HCT116 (cell line): ENCODE measurements at regions of chr11 and their contacts with region 1.

Region 1: GRCh38 chr11:73779084-73779902 is 8.4 kb upstream of the MRPL48 start:
- DNase-seq: peak; percentile 97
- ATAC-seq: peak; percentile 97
- H3K4me3 ChIP-seq: peak overlapping the region; percentile 57 to 62
- H3K27ac ChIP-seq: peak overlapping the region; percentile 66
- H3K4me1 ChIP-seq: peaks cover 13 to 23% of the 10 kb centered on the region in 2 experiments
- H3K27me3 ChIP-seq: no peaks in the 10 kb centered on the region
- CTCF ChIP-seq: no peak
- POLR2A ChIP-seq: peak; percentile 56
- RAD21 ChIP-seq: no peak

Region 2: GRCh38 chr11:73760679-73761402 is 18.5 kb before region 1 on chr11 and contains the start of gene RAB6A:
- CTCF ChIA-PET with region 1: interaction called, 10 read pairs
- POLR2A ChIA-PET with region 1: interaction called, 57 read pairs
- RAD21 ChIA-PET with region 1: interaction called, 4 to 6 read pairs
- intact Hi-C with region 1: loop called (anchors 1 kb)
- DNase-seq: peak; percentile 99
- ATAC-seq: peak; percentile 90
- H3K4me3 ChIP-seq: peak within 1 kb of the TSS; percentile 86 to 94
- H3K27ac ChIP-seq: peak within 1 kb of the TSS; percentile 92
- H3K4me1 ChIP-seq: peaks cover 10 to 21% of the 10 kb centered on the region in 2 experiments; a peak in 3 of 4 replicates
- H3K27me3 ChIP-seq: no peaks in the 10 kb centered on the region
- CTCF ChIP-seq: peak in 1 of 3 experiments; percentile 34; a peak in 2 of 6 replicates
- POLR2A ChIP-seq: peak; percentile 82
- RAD21 ChIP-seq: no peak; the same call in 1 of the 2 replicates
- total RNA-seq, gene RAB6A: 121 TPM

Region 3: DNA sequence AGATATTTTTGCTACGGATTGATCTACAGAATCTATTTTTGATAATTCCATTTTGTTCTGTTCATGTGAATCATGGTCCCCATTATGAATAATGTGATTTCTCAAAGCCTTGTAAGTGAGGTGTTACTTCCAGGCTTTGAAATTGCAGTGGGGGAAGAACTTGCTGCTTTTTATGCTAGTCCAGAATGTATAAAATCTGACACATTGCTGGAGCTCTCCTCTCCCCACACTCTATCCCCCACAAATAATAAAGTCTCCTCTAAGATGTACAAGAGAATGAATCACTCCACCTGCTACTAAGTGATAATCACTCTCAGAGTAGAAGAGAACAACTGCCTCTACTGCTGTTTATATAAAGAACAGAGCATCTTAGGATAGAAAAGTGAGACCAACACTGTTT is 12.5 kb before region 1 on chr11:
- CTCF ChIA-PET with region 1: no interaction called
- POLR2A ChIA-PET with region 1: interaction called, 57 read pairs
- RAD21 ChIA-PET with region 1: no interaction called
- intact Hi-C with region 1: loop called (anchors 1 kb)
- DNase-seq: no peak
- ATAC-seq: no peak
- H3K4me3 ChIP-seq: no peak overlapping the region
- H3K27ac ChIP-seq: no peak overlapping the region
- H3K4me1 ChIP-seq: peaks cover 0 to 5% of the 10 kb centered on the region in 2 experiments; a peak in 1 of 4 replicates
- H3K27me3 ChIP-seq: no peaks in the 10 kb centered on the region
- CTCF ChIP-seq: no peak
- POLR2A ChIP-seq: no peak
- RAD21 ChIP-seq: no peak